Colonic mucosa (tissue), 4 donors: ENCODE measurements at regions of chrX and their contacts with region 1.

Region 1: DNA sequence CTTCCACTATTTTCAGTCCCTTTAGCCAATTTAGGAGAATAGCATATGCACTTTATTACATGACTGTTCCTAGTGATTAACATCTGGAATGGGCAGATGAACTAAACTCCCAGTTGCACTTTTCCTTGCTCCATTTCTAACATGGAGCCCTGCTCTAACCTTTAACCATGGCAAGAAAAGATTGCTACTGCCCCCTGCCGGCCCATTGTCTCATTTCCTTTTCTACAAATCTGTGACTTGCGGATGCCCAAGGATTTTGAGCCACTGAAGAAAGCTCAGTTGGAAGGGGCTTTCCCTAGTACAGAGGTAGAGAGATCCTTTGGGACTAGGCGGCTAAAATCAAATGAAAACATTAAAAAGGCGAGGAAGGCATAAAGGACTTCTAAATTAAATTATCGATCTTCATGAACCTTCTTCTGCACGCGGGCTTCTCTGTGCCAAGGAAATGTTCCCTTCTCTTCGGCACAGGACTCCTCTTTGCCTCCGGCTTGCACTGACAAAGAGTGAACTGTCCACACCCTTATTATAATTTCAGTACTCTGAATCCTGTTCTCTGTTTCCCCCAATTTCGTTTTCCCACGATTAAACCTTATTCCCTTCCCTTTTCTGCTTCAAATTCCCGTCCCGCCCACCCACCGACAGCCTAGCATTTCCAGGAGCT is 577 bp upstream of the GLRA2 start:
- DNase-seq: peak; percentile 87
- H3K4me3 ChIP-seq: no peak overlapping the region
- H3K27ac ChIP-seq: no peak overlapping the region
- H3K4me1 ChIP-seq: no peaks in the 10 kb centered on the region
- H3K27me3 ChIP-seq: no peaks in the 10 kb centered on the region
- CTCF ChIP-seq: peak; percentile 39

Region 2: GRCh38 chrX:14010566-14010965 is 518.2 kb before region 1 on chrX:
- intact Hi-C with region 1: no loop called
- DNase-seq: no peak
- H3K4me3 ChIP-seq: no peak overlapping the region
- H3K27ac ChIP-seq: no peak overlapping the region
- H3K4me1 ChIP-seq: no peaks in the 10 kb centered on the region
- H3K27me3 ChIP-seq: no peaks in the 10 kb centered on the region
- CTCF ChIP-seq: no peak

Region 3: GRCh38 chrX:14051416-14051815 is 477.3 kb before region 1 on chrX:
- intact Hi-C with region 1: loop called (anchors 5 kb)
- DNase-seq: no peak
- H3K4me3 ChIP-seq: no peak overlapping the region
- H3K27ac ChIP-seq: no peak overlapping the region
- H3K4me1 ChIP-seq: no peaks in the 10 kb centered on the region
- H3K27me3 ChIP-seq: no peaks in the 10 kb centered on the region
- CTCF ChIP-seq: no peak

Region 4: DNA sequence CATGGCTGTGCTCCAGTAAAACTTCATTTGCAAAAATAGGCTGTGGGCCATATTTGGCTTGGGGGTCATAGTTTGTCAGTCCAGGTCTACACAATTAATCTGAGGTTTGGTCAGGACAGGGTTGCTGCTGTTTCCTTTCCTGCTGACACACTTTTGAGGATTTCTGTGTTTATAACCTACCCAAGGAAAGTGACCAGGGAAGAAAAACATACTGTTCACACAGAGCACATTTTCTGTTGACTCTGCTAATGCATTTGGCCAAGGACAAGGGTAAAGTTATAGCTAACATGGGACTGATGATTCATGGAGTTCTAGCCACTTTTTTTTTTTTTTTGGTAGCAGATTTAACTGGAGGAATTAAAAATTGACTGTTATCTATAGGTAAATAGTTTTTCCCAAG is 455.2 kb before region 1 on chrX:
- intact Hi-C with region 1: no loop called
- DNase-seq: no peak
- H3K4me3 ChIP-seq: no peak overlapping the region
- H3K27ac ChIP-seq: no peak overlapping the region
- H3K4me1 ChIP-seq: no peaks in the 10 kb centered on the region
- H3K27me3 ChIP-seq: no peaks in the 10 kb centered on the region
- CTCF ChIP-seq: no peak